A673 (cell line): ENCODE measurements at regions of chr20 and their contacts with region 1.

Region 1: GRCh38 chr20:49541733-49542513 is 26.0 kb downstream of the PTGIS start:
- DNase-seq: peak; percentile 87
- H3K4me3 ChIP-seq: no peak overlapping the region
- H3K27ac ChIP-seq: no peak overlapping the region
- H3K4me1 ChIP-seq: no peaks in the 10 kb centered on the region
- H3K27me3 ChIP-seq: no peaks in the 10 kb centered on the region
- CTCF ChIP-seq: peak; percentile 90

Region 2: GRCh38 chr20:49603209-49603627 is 61.3 kb after region 1 on chr20:
- CTCF ChIA-PET with region 1: interaction called, 30 read pairs
- POLR2A ChIA-PET with region 1: no interaction called
- intact Hi-C with region 1: loop called (anchors 1 kb)
- DNase-seq: no peak
- H3K4me3 ChIP-seq: no peak overlapping the region
- H3K27ac ChIP-seq: no peak overlapping the region
- H3K4me1 ChIP-seq: no peaks in the 10 kb centered on the region
- H3K27me3 ChIP-seq: no peaks in the 10 kb centered on the region
- CTCF ChIP-seq: peak; percentile 42

Region 3: GRCh38 chr20:49610701-49611538 is 69.0 kb after region 1 on chr20:
- CTCF ChIA-PET with region 1: interaction called, 30 read pairs
- POLR2A ChIA-PET with region 1: no interaction called
- intact Hi-C with region 1: loop called (anchors 2 kb)
- DNase-seq: peak; percentile 77
- H3K4me3 ChIP-seq: peak overlapping the region; percentile 32
- H3K27ac ChIP-seq: no peak overlapping the region
- H3K4me1 ChIP-seq: no peaks in the 10 kb centered on the region
- H3K27me3 ChIP-seq: no peaks in the 10 kb centered on the region
- CTCF ChIP-seq: peak; percentile 99

Region 4: GRCh38 chr20:49846206-49846807 is 304.4 kb after region 1 on chr20:
- CTCF ChIA-PET with region 1: interaction called, 13 read pairs
- POLR2A ChIA-PET with region 1: no interaction called
- intact Hi-C with region 1: no loop called
- DNase-seq: peak; percentile 76
- H3K4me3 ChIP-seq: no peak overlapping the region
- H3K27ac ChIP-seq: no peak overlapping the region
- H3K4me1 ChIP-seq: peaks cover 6% of the 10 kb centered on the region
- H3K27me3 ChIP-seq: no peaks in the 10 kb centered on the region
- CTCF ChIP-seq: peak; percentile 73

Region 5: DNA sequence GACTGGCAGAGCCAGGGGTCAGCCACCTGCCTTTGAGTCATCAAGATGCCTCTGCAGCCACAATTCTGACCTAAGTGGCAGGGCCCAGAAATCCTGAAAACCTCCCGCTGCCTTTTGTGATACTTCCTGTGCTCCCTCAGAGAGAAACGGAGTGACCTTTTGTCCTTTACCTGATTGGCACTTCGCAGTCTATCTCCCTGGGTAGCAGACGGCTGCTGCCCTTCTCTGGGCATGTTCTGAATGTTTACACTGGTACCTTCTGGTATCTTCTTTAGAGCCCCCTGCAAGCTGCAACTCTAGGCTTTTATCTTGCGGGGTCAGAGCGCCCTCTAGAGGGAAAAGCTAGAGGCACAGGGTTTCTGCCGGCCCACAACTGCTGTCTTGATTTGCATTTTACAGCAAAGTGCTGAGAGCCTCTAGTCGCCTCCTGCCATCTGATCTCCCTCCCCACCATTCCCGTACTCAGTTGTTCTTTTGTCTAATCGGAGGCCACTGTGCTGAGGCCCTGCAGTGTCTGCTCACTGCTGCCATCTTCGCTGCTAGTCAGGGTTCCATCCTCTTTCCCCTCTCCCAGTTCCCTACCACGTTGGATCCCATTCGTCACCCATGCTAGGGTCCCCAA is 346.5 kb after region 1 on chr20:
- CTCF ChIA-PET with region 1: interaction called, 13 read pairs
- POLR2A ChIA-PET with region 1: no interaction called
- intact Hi-C with region 1: loop called (anchors 5 kb)
- DNase-seq: peak; percentile 77
- H3K4me3 ChIP-seq: no peak overlapping the region
- H3K27ac ChIP-seq: no peak overlapping the region
- H3K4me1 ChIP-seq: no peaks in the 10 kb centered on the region
- H3K27me3 ChIP-seq: no peaks in the 10 kb centered on the region
- CTCF ChIP-seq: peak; percentile 91

Region 6: DNA sequence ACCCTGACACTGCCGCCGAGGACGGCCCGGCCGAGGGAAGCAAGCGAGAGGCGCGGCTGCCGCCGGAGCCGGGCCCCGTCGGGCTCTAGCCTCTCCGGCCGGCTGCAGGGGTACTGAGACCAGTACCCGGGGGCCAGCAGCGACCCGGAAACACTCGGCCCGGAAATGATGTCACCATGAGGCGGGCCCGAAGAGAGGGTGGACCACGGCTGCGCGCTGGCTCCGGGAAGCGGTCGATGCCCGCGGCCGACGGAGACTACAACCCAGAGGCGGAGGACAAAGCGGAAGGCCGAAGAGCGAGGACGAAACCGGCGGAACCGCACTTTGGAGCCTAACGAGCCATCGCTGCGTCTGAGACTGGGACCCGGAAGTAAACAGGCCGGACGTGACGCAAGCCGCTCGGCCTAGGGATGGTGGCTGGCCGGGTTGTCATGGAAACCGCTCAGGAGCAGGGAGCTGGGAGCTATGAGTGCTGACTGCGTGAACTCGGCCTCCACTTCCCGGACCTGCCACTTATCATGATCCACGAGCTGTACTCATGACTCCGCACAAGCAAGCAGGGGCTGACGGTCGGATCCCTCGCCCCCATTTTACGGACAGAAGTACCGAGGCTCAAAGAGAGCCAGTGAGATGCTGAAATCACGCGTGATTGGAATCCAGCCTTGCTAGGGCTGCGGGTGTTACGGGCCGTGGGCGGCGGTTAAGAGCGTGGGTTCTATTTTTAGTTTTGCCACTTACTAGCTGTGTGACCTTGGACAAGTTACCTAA is 373.6 kb after region 1 on chr20 and contains the start of gene SPATA2:
- CTCF ChIA-PET with region 1: interaction called, 14 read pairs
- POLR2A ChIA-PET with region 1: no interaction called
- intact Hi-C with region 1: no loop called
- DNase-seq: peak; percentile 97
- H3K4me3 ChIP-seq: peak within 1 kb of the TSS; percentile 90
- H3K27ac ChIP-seq: peak within 1 kb of the TSS; percentile 100
- H3K4me1 ChIP-seq: peaks cover 8% of the 10 kb centered on the region
- H3K27me3 ChIP-seq: no peaks in the 10 kb centered on the region
- CTCF ChIP-seq: no peak
- total RNA-seq, gene SPATA2: 9.2 and 9.7 TPM in 2 replicates